A673 (cell line): ENCODE measurements at regions of chr6 and their contacts with region 1.

Region 1: GRCh38 chr6:33700391-33701050 is 11.0 kb downstream of the UQCC2 start:
- DNase-seq: peak; percentile 82
- H3K4me3 ChIP-seq: no peak overlapping the region
- H3K27ac ChIP-seq: no peak overlapping the region
- H3K4me1 ChIP-seq: peaks cover 44% of the 10 kb centered on the region
- H3K27me3 ChIP-seq: no peaks in the 10 kb centered on the region
- CTCF ChIP-seq: peak; percentile 88

Region 2: DNA sequence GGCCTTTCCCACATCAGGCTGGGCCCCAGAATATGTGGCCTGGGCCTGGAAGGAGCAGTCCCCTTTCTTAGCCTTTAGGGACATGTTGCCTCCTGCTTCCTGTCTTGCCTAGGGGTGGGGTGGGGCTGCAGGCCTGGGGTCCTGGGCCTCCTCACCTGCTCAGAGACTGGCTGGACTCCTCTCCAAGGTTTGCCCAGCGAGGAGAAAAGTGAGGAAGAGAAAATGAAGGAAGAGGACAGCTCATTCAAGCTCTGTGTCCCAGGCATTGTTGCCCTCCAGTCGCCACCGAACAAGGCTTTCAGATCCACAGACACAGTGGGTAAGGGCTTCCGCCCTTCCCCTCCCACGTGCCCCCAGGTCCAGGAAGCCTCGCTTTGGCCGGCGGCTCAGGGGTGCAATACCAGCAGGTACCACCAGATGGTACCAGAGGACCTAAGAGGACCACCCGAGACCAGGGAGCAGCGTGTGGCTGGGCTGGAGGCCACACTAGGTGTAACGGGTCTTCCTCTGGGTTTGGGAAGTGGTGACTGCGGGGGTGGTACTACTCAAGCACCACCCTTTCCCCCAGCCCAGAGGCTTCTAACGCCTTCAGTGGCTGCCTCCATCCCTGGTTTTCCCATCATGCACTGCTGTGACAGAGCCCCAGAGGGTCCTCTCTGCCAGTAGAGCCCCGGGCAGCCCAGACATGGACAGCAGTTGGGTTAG is 115.0 kb before region 1 on chr6:
- CTCF ChIA-PET with region 1: interaction called, 5 read pairs
- POLR2A ChIA-PET with region 1: no interaction called
- intact Hi-C with region 1: loop called (anchors 2 kb)
- DNase-seq: peak; percentile 81
- H3K4me3 ChIP-seq: no peak overlapping the region
- H3K27ac ChIP-seq: no peak overlapping the region
- H3K4me1 ChIP-seq: no peaks in the 10 kb centered on the region
- H3K27me3 ChIP-seq: no peaks in the 10 kb centered on the region
- CTCF ChIP-seq: peak; percentile 98

Region 3: DNA sequence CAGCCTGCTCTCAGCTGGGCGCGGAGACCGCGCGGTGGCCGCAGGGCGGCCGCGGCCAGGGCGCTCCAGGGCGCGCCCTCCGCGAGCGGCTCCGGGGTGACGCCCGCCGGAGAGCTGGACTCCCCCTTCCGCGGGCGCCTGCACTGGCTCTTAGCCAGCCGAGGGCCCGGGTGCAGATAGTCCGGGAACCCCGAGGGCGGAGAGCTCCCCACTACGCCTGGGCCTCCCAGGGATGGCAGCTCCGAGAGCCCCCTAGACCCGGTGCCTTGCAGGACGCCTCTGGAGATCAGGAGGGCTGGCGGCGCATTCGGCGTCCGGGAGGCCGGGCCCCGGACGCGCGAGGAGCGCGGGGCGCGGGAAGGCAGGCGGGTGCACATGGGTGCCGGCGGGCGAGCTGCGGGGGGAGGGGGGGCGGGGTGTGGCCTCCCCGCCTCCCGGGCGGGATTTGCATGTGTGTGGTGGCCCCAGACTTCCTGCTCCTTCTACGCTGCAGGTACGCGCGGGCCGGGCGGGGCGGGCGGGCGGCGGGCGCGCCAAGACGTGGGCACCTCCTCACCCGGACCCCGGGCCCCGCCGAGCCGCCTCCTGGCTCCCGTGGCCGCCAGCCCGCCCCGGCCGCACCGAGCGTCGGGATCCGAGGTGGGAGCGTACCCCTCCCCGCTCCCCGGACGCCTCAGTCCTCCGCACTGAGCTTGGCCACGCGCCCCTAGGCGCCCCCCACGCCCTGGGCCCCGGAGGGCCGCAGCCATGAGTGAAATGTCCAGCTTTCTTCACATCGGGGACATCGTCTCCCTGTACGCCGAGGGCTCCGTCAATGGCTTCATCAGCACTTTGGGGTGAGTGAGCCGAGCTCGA is 79.4 kb before region 1 on chr6 and contains the start of gene ITPR3:
- CTCF ChIA-PET with region 1: interaction called, 3 read pairs
- POLR2A ChIA-PET with region 1: no interaction called
- intact Hi-C with region 1: loop called (anchors 2 kb)
- DNase-seq: peak; percentile 65
- H3K4me3 ChIP-seq: peak within 1 kb of the TSS; percentile 66
- H3K27ac ChIP-seq: peak within 1 kb of the TSS; percentile 72
- H3K4me1 ChIP-seq: peaks cover 35% of the 10 kb centered on the region
- H3K27me3 ChIP-seq: no peaks in the 10 kb centered on the region
- CTCF ChIP-seq: no peak
- total RNA-seq, gene ITPR3: 27.8 and 27.9 TPM in 2 replicates

Region 4: DNA sequence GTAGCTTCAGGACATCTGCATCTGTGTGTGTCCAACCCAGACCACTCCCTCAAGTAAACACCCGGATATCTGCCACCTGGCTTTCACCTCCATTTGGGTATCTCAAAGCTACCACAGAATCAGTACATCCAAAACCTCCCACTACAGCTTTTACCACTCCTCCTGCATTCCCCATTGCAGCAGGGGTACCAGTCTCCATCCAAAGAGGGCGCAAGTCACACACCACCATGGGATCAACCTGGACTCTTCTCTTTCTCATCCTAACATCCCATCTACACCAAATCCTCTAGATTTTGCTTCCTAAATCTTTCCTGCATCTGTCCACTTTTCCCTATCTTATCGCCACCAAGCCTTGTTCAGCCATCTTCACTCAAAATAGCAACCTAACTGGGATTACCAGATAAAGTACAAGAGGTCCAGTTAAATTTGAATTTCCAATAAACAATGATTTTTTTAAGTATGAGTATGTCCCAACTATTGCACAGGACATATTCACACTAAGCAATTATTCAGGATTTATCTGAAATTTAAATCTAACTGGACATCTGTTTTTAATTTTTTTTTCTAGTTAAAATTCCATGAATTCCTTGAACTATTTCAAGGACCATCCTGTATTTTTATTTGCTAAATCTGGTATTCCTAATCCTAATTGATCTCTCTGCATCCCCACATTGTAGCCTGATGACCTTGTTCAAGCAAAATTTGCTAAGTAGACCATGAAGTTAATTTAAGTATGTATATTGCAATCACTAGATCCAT is 267.6 kb after region 1 on chr6:
- CTCF ChIA-PET with region 1: no interaction called
- POLR2A ChIA-PET with region 1: no interaction called
- intact Hi-C with region 1: no loop called
- DNase-seq: peak; percentile 28
- H3K4me3 ChIP-seq: no peak overlapping the region
- H3K27ac ChIP-seq: no peak overlapping the region
- H3K4me1 ChIP-seq: no peaks in the 10 kb centered on the region
- H3K27me3 ChIP-seq: no peaks in the 10 kb centered on the region
- CTCF ChIP-seq: peak; percentile 54